HEK293 (cell line): ENCODE measurements at regions of chr6 and their contacts with region 1.

Region 1: GRCh38 chr6:161370880-161371279 is 97.0 kb upstream of the AGPAT4 start:
- H3K4me3 ChIP-seq: no peak overlapping the region
- H3K27ac ChIP-seq: no peak overlapping the region
- H3K4me1 ChIP-seq: no peaks in the 10 kb centered on the region
- CTCF ChIP-seq: peak; percentile 78

Region 2: DNA sequence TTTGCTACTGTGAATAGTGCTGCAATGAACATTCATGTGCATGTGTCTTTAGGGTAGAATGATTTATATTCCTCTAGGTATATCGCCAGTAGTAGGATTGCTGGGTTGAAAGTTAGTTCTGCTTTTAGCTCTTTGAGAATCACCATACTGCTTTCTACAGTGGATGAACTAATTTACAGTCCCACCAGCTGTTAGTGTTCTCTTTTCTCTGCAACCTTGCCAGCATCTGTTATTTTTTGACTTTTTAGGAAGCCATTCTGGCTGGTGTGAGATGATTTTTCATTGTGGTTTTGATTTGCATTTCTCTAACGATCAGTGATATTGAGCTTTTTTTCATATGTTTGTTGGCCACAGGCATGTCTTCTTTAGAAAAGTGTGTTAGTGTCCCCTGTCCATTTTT is 628.8 kb before region 1 on chr6:
- CTCF ChIA-PET with region 1: interaction called, 14 read pairs
- POLR2A ChIA-PET with region 1: no interaction called
- H3K4me3 ChIP-seq: no peak overlapping the region
- H3K27ac ChIP-seq: no peak overlapping the region
- H3K4me1 ChIP-seq: no peaks in the 10 kb centered on the region
- CTCF ChIP-seq: no peak

Region 3: DNA sequence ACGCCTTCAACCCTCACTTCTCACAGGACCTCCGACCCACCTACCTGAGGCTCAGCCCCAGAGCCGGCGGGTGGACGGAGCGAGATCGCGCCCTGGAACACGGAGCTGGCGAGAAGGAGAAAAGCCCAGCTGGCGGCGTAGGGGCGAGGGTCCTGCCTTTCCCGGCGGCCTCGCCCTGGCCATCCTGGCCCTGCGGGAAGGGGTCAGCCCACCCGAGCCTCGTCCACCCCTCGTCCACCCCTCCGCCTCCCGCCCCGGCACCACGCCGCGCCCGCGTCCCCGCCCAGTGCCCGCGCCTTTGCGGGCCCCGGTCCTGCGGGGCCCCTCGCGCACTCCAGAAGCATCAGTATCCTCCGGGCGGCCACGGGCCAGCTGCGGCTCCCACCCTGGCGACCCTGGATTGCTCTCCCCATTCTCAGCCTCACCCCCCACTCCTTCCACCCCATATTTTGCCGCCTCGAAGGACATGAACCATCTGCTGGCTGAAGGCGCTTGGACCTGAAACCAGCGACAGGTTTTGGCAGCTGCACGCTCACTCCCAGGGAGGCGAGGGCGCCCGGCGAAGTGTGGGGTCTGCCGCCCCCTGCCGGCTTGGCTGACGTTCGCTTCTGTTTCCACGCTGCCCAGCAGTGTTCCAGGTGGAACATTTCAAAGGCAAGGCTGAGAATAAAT is 603.8 kb before region 1 on chr6:
- CTCF ChIA-PET with region 1: interaction called, 12 read pairs
- POLR2A ChIA-PET with region 1: no interaction called
- H3K4me3 ChIP-seq: peak overlapping the region; percentile 58
- H3K27ac ChIP-seq: no peak overlapping the region; the same call in 1 of the 2 replicates
- H3K4me1 ChIP-seq: peaks cover 5% of the 10 kb centered on the region; the same call in 1 of the 2 replicates
- CTCF ChIP-seq: peak; percentile 66

Region 4: DNA sequence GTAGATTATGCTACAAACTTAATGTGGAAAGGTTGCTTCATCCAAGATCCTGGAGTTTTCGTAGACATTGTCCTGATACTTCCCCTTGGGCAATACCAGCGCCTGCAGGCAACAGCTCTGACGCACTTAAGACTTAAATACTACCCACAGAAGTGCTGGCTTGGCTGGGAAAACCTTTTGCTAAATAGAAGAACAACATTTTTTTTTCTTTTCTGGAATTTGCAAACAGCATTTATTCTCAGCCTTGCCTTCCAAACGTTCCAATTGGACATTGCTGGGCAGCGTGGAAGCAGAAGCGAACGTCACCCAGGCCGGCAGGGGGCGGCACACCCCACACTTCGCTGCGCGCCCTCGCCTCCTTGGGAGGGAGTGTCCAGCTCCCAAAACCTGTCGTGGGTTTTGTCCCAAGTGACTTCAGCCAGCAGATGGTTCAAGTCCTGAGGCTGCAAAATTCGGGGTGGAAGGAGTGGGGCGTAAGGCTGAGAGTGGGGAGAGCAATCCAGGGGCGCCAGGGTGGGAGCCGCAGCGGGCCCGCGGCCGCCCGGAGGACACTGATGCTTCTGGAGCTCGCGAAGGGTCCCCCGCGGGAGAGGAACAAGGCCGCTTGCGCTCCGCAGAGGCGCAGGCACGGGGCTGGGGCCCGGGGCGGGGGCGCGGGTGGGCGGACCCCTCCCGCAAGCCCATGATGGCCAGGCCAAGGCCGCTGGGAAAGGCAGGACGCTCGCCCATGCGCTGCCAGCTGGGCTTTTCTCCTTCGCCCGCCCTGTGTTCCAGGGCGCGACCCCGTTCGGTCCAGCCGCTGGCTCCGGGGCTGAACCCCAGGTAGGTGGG is 440.1 kb before region 1 on chr6:
- CTCF ChIA-PET with region 1: interaction called, 261 read pairs
- POLR2A ChIA-PET with region 1: no interaction called
- H3K4me3 ChIP-seq: peak overlapping the region; percentile 32
- H3K27ac ChIP-seq: no peak overlapping the region
- H3K4me1 ChIP-seq: no peaks in the 10 kb centered on the region
- CTCF ChIP-seq: peak; percentile 91

Region 5: DNA sequence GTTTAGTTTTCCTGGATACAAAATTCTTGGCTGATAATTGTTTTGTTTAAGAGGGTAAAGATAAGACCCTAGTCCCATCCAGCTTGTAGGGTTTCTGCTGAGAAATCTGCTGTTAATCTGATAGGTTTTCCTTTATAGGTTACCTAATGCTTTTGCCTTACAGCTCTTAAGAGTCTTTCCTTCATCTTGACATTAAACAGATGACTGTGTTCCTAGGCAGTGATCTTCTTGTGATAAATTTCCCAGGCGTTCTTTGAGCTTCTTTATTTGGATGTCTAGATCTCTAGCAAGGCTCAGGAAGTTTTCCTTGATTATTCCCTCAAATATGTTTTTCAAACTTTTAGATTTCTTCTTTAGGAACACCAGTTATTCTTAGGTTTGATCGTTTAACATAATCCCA is 245.3 kb before region 1 on chr6:
- CTCF ChIA-PET with region 1: interaction called, 16 read pairs
- POLR2A ChIA-PET with region 1: no interaction called
- H3K4me3 ChIP-seq: no peak overlapping the region
- H3K27ac ChIP-seq: no peak overlapping the region
- H3K4me1 ChIP-seq: no peaks in the 10 kb centered on the region
- CTCF ChIP-seq: no peak

Region 6: DNA sequence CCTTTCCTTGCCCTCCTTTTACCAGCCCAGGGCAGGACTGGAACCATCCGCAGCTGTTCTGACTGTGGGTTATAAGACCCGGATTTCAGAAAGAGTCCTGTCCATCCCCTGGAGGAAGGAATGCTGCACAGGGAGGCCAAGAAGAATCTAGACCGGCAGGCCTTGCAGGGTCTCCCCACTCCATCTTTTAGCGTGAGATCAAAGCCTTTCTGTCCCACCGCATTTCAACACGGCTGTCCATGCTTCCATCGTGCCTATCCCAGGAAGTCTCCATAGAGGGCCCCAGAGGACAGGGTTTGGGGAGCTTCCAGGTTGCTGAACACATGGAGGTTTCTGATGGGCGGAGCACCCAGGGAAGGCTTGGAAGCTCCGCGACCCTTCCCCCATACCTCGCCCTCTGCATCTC is 17.7 kb before region 1 on chr6:
- CTCF ChIA-PET with region 1: interaction called, 64 read pairs
- POLR2A ChIA-PET with region 1: no interaction called
- H3K4me3 ChIP-seq: no peak overlapping the region
- H3K27ac ChIP-seq: no peak overlapping the region
- H3K4me1 ChIP-seq: no peaks in the 10 kb centered on the region
- CTCF ChIP-seq: no peak

Region 7: GRCh38 chr6:161607696-161608297 is 236.9 kb after region 1 on chr6:
- CTCF ChIA-PET with region 1: no interaction called
- POLR2A ChIA-PET with region 1: no interaction called
- H3K4me3 ChIP-seq: no peak overlapping the region
- H3K27ac ChIP-seq: no peak overlapping the region
- H3K4me1 ChIP-seq: 0 out of 2 replicates have a peak, but pooled peaks cover 1% of the 10 kb centered on the region
- CTCF ChIP-seq: no peak